Endothelial cell of umbilical vein (primary cell): ENCODE measurements at regions of chr9 and their contacts with region 1.

Region 1: DNA sequence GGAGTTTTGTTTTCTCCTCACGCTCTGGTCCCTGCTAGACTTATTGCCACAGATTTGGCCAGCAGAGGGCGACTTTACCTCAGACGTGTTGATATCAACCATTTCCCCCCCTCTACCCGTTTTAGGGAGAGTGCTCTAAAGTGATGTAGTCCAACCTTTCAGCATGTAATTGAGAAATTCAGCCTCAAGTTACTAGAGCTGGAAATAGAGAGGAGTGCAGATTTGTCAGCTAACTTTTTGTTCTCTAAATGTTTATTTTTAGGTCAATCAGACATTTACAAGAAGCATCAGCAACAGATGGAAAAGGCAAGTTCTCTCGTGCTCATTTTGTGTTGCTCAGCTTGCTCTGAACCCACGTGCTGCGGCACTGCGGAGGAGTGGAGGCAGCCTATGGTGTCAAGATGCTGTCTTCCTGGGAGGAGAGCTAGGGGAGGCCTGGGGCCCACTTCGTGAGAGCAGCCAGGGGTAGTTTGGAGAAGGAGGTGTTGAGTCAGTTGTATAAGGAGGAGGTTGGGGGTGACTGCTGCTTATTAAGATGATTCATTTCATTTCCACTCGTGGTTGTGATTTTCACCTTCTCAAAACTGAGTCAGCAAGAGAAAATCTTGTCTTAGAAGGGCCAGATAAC is 53.6 kb downstream of the GPR107 start:
- DNase-seq: peak; percentile 66
- H3K4me3 ChIP-seq: no peak overlapping the region
- H3K27ac ChIP-seq: no peak overlapping the region
- H3K4me1 ChIP-seq: peaks cover 5% of the 10 kb centered on the region
- H3K27me3 ChIP-seq: no peaks in the 10 kb centered on the region
- CTCF ChIP-seq: peak; percentile 68 to 77
- POLR2A ChIP-seq: no peak

Region 2: GRCh38 chr9:130172161-130172857 is 65.0 kb after region 1 on chr9 and contains the start of gene NCS1:
- CTCF ChIA-PET with region 1: interaction called, 4 read pairs
- POLR2A ChIA-PET with region 1: no interaction called
- dilution Hi-C with region 1: no loop called
- intact Hi-C with region 1: loop called (anchors 2 kb)
- DNase-seq: peak; percentile 36
- H3K4me3 ChIP-seq: peak within 1 kb of the TSS; percentile 47 to 60 (median 54)
- H3K27ac ChIP-seq: peak within 1 kb of the TSS; percentile 43
- H3K4me1 ChIP-seq: peaks cover 9% of the 10 kb centered on the region
- H3K27me3 ChIP-seq: no peaks in the 10 kb centered on the region
- CTCF ChIP-seq: no peak
- POLR2A ChIP-seq: no peak
- total RNA-seq, gene NCS1: 68.3 and 77.4 TPM in 2 replicates

Region 3: DNA sequence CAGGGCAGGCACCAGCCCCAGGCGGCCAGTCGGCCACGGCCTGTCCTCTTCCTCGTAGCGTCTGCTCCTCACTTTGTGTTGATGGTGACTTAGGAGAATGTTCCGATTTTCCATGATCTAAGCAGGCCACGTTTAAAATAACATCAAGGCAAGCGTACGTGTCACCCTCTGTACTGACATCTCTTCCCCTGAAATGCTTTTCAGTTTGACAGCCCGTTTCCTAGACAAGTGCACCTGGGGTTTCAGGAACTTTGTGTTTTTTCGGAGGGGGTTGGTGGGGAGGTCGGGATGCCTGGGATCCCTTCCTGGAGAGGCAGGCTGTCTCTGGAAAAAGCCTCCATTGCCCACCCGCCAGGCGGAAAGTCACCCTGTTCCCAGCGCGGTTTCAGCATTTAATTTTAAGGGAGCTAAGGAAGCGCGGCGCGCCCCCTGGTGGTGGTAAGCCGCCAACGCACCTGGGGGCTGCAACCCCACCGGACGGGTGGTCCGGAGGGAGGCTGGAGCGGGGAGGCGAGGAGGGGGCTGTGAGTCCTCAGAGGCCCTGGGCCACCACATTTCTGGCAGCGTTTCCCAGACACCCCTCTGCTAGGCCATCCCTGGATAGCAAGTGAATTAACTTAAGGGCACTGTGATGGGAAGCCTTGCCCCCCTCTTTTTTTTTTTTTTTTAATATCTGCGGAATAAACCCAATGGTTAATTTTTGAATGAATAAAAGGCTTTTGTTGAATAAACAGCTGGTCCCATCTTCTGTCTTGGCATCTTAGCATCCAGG is 128.7 kb after region 1 on chr9:
- CTCF ChIA-PET with region 1: interaction called, 54 read pairs
- POLR2A ChIA-PET with region 1: no interaction called
- dilution Hi-C with region 1: no loop called
- intact Hi-C with region 1: loop called (anchors 1 kb)
- DNase-seq: peak; percentile 49
- H3K4me3 ChIP-seq: no peak overlapping the region
- H3K27ac ChIP-seq: no peak overlapping the region
- H3K4me1 ChIP-seq: peaks cover 8% of the 10 kb centered on the region
- H3K27me3 ChIP-seq: no peaks in the 10 kb centered on the region
- CTCF ChIP-seq: peak; percentile 94 to 98
- POLR2A ChIP-seq: no peak